Activated T-helper 1 cell treated with anti-CD3 and anti-CD28 coated beads, Interleukin-12 subunit alpha, Interleukin-12 subunit beta, Interleukin-2, Interleukin-4 antibody, amounts not matched to agents 30 ng/mL and 10 ng/mL and 1 ng/mL, durations not matched to agents 14 hours and 24 hours and 36 hours (primary cell): ENCODE measurements at regions of chr12 and their contacts with region 1.

Region 1: GRCh38 chr12:6662906-6663742 is at the start of gene ING4:
- DNase-seq: peak; percentile 95
- H3K4me3 Mint-ChIP-seq: peak within 1 kb of the TSS; percentile 89
- H3K27ac Mint-ChIP-seq: peak within 1 kb of the TSS; percentile 91
- H3K4me1 Mint-ChIP-seq: peaks cover 30% of the 10 kb centered on the region
- H3K27me3 Mint-ChIP-seq: no peaks in the 10 kb centered on the region
- total RNA-seq, gene ING4: 14.6 and 15.0 TPM in 2 replicates

Region 2: DNA sequence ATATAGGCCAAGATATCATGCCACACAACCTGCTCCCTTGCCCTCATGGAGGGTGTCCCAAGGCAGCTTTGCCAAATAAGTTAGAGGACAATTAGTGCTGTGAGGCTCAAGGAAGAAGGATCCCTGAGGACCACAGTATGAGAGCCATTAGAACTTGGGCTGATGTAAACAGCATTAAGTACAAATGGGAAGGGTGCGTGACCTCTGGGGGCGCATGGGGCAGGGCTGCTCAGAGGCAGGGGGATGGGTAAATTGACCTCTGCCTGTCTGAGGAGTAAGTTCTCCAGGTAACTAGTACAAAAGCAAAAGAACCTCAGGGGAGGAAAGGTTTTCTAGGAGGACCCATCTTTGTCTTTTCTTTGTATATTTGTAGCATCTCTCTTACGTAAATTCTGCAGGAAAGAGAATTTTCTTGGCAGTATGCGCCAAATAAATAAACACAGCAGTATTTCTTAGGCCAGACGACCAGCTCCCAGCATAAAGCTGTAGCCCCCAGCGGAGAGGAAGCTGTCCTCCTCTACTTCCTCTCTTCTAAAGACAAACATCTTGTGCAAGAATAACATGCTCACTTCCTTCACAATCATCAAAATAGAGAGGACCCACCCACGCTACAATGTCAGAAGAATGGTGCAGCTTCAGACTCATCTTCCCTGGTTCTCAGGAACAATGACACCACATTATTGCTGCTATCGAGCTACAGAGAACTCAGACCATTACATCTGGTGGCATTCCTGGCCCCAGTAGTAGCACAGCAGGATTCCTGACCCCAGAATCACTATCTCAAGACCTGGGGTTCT is 522.3 kb before region 1 on chr12:
- intact Hi-C with region 1: no loop called
- DNase-seq: no peak
- H3K4me3 Mint-ChIP-seq: peak overlapping the region; percentile 48
- H3K27ac Mint-ChIP-seq: peak overlapping the region; percentile 93
- H3K4me1 Mint-ChIP-seq: peaks cover 38% of the 10 kb centered on the region
- H3K27me3 Mint-ChIP-seq: no peaks in the 10 kb centered on the region

Region 3: DNA sequence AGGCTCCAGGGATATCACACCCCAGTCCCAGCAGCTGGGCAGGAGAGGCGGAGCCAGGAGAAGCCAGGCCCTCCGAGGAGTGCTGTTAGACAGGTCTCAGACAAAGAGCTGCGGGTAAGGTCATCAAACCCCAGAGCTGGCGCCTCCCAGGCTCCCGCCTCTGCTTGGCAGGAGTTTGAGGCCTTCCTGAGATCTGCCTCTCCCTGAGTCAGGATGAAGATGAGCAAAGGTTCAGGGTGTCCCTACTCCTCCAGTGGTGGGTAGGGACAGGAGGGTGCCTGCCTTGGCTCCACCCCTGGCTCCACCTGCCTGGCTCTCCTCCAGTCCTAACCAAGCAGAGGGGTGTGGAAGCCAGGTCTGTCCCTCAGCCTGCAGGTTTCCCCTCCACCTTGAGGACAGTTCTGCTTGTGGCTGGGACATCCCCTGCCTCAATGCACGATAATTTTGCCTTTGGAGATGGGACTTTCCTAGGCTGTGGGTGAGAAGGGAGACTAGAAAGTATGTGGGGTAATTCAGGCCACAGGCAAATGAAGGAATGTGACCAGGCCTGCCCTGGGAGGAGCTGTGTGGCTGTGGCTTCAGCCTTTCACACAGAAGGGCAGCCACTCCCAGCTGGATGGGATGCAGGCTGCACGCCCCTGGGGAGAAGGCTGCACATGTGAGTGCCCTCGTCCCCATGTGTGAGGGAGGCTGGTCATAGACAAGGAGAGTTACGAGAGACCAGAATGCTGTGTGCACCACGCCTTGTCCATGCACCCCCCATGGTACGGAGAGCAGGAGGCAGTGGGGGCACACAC is 350.4 kb before region 1 on chr12:
- intact Hi-C with region 1: no loop called
- DNase-seq: peak; percentile 17
- H3K4me3 Mint-ChIP-seq: no peak overlapping the region
- H3K27ac Mint-ChIP-seq: no peak overlapping the region
- H3K4me1 Mint-ChIP-seq: peaks cover 14% of the 10 kb centered on the region
- H3K27me3 Mint-ChIP-seq: peaks cover 22% of the 10 kb centered on the region

Region 4: DNA sequence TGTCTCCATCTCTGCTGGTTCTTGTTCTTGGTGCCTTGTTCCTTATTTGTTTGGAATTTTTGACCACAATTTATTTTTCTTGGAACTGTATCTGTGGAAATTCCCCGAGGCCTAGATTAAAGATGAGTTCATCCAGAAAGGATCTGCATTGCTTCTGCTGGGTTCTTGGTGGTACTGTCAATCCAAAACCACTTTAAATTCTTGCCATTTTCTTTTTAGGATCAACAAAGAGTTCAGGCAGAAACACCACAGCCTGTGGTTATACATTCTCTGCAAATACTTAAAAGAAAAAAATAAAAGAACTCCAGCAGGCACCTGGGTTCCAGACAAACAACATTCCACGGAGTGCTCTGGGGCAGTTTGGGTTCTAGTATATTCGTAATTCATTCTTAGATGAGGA is 186.6 kb before region 1 on chr12:
- intact Hi-C with region 1: no loop called
- DNase-seq: no peak
- H3K4me3 Mint-ChIP-seq: no peak overlapping the region
- H3K27ac Mint-ChIP-seq: peak overlapping the region; percentile 58
- H3K4me1 Mint-ChIP-seq: peaks cover 10% of the 10 kb centered on the region
- H3K27me3 Mint-ChIP-seq: peaks cover 8% of the 10 kb centered on the region

Region 5: DNA sequence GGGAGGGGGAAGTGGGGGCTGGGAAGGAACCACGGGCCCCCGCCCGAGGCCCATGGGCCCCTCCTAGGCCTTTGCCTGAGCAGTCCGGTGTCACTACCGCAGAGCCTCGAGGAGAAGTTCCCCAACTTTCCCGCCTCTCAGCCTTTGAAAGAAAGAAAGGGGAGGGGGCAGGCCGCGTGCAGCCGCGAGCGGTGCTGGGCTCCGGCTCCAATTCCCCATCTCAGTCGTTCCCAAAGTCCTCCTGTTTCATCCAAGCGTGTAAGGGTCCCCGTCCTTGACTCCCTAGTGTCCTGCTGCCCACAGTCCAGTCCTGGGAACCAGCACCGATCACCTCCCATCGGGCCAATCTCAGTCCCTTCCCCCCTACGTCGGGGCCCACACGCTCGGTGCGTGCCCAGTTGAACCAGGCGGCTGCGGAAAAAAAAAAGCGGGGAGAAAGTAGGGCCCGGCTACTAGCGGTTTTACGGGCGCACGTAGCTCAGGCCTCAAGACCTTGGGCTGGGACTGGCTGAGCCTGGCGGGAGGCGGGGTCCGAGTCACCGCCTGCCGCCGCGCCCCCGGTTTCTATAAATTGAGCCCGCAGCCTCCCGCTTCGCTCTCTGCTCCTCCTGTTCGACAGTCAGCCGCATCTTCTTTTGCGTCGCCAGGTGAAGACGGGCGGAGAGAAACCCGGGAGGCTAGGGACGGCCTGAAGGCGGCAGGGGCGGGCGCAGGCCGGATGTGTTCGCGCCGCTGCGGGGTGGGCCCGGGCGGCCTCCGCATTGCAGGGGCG is 129.0 kb before region 1 on chr12 and contains the start of gene GAPDH:
- intact Hi-C with region 1: loop called (anchors 1 kb)
- DNase-seq: peak; percentile 86
- H3K4me3 Mint-ChIP-seq: peak within 1 kb of the TSS; percentile 91
- H3K27ac Mint-ChIP-seq: peak within 1 kb of the TSS; percentile 99
- H3K4me1 Mint-ChIP-seq: peaks cover 58% of the 10 kb centered on the region
- H3K27me3 Mint-ChIP-seq: no peaks in the 10 kb centered on the region
- total RNA-seq, gene GAPDH: 4,315 and 4,318 TPM in 2 replicates

Region 6: DNA sequence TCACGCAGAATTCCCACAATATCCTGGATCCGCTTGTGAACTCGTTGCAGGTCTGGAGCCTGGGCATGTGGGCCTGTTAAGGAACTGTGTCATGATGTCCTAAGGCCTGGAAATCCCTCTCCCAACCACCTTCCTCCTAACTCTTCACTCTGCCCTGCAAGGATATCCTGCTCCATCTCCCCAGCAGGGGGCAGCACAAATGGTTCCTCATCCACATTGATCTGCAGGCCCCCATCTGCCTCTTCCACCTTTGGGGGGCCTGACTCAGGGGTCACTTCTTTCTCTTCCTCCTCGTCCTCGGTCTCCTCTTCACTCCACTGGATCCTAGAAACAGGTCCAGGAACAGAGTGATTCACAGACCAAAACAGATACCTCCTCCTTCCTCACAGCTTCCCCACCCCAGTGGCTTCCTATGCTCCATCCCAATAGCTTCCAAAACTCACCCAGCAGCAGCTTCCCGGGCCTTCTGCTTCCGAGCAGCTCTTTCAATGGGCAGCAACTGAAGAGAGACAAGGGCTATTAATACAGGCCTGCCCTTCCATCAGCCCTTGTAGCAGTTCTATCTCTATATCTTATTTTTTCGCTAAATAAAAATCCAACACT is 99.6 kb before region 1 on chr12:
- intact Hi-C with region 1: loop called (anchors 1 kb)
- DNase-seq: peak; percentile 47
- H3K4me3 Mint-ChIP-seq: no peak overlapping the region
- H3K27ac Mint-ChIP-seq: peak overlapping the region; percentile 24
- H3K4me1 Mint-ChIP-seq: peaks cover 28% of the 10 kb centered on the region
- H3K27me3 Mint-ChIP-seq: no peaks in the 10 kb centered on the region

Region 7: GRCh38 chr12:6632026-6632983 is 30.8 kb before region 1 on chr12:
- intact Hi-C with region 1: loop called (anchors 1 kb)
- DNase-seq: peak; percentile 46
- H3K4me3 Mint-ChIP-seq: peak overlapping the region; percentile 67
- H3K27ac Mint-ChIP-seq: peak overlapping the region; percentile 96
- H3K4me1 Mint-ChIP-seq: peaks cover 60% of the 10 kb centered on the region
- H3K27me3 Mint-ChIP-seq: no peaks in the 10 kb centered on the region

Region 8: DNA sequence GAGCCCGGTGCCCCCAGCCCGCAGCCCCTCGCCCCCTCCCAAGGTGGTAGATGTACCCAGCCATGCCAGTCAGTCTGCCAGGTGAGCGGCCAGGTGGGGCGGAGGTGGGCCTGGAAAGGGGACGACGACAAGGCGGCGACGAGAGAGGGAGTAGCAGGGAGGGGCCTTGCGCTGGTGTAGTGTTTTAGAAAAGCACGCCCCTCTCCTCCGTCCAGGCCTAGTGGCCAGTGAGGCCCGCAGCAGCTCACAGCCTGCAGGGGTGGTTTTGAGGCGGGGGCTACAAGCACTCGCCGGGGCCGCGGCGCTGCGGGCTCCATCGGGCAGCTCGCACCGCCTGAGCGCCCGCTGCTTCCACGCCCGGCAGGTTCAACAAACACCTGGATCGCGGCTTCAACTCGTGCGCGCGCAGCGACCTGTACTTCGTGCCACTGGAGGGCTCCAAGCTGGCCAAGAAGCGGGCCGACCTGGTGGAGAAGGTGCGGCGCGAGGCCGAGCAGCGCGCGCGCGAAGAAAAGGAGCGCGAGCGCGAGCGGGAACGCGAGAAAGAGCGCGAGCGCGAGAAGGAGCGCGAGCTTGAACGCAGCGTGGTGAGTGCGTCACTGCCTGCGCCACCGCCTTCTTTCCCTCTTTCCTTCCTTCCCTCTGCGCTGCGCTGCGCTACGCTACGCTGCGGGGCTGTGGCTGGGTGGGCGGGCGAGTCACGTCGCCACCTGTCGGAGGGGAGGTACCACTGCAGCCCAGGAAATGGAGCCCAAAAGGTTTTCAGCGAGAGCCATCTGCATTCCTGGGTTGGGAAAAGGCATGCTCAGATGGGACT is 274.6 kb after region 1 on chr12:
- intact Hi-C with region 1: loop called (anchors 1 kb)
- DNase-seq: peak; percentile 91
- H3K4me3 Mint-ChIP-seq: peak overlapping the region; percentile 88
- H3K27ac Mint-ChIP-seq: peak overlapping the region; percentile 98
- H3K4me1 Mint-ChIP-seq: peaks cover 59% of the 10 kb centered on the region
- H3K27me3 Mint-ChIP-seq: no peaks in the 10 kb centered on the region